ENCODE measurements at regions of chr5 and their contacts with region 1.

Region 1: GRCh38 chr5:147547730-147548129 is 37.9 kb upstream of the DPYSL3 start:
- DNase-seq: peak in 1 of 2 donors; percentile 53
- ATAC-seq: peak; percentile 70
- H3K4me3 ChIP-seq: no peak overlapping the region
- H3K27ac ChIP-seq: no peak overlapping the region
- H3K4me1 ChIP-seq: peaks cover 0 to 7% of the 10 kb centered on the region in 2 donors
- H3K27me3 ChIP-seq: no peaks in the 10 kb centered on the region

Region 2: DNA sequence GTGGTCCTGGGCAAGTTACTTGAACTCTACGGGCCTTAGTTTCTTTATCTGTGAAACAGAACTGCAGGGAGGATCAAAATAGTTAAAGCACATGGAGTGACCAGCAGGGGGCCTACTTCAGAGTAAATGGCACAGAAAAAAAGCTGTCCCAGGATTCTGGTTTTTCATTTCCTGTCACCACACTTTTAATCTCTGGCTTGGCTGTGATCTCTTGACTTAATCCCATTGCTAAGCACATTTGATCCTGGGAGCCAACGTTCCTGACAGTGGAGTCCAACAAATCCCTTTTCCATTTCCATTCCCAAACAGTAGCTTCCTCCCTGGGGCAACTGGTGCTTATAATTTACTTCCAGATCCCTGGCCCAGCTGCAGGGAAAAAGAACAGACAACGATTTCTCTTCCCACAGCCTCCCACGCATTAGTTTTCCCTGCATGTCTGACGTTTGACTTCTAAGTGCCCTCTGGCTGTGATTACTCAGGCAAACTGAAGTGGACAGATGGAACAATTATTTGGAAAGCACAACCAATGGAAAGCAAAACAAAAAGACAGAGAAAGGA is 449.4 kb before region 1 on chr5:
- intact Hi-C with region 1: no loop called
- DNase-seq: no peak
- ATAC-seq: peak; percentile 53
- H3K4me3 ChIP-seq: no peak overlapping the region
- H3K27ac ChIP-seq: no peak overlapping the region
- H3K4me1 ChIP-seq: no peaks in the 10 kb centered on the region
- H3K27me3 ChIP-seq: no peaks in the 10 kb centered on the region

Region 3: GRCh38 chr5:147509710-147510651 is 37.7 kb before region 1 on chr5 and contains the start of gene DPYSL3:
- intact Hi-C with region 1: loop called (anchors 5 kb)
- DNase-seq: peak; percentile 86 to 94
- ATAC-seq: peak; percentile 94
- H3K4me3 ChIP-seq: peak within 1 kb of the TSS; percentile 60 to 70
- H3K27ac ChIP-seq: peak within 1 kb of the TSS in 1 of 2 donors; percentile 65
- H3K4me1 ChIP-seq: peaks cover 0 to 2% of the 10 kb centered on the region in 2 donors
- H3K27me3 ChIP-seq: no peaks in the 10 kb centered on the region
- total RNA-seq, gene DPYSL3: 288 to 344 TPM